Ovary (tissue), 10 donors: ENCODE measurements at regions of chr5 and their contacts with region 1.

Region 1: DNA sequence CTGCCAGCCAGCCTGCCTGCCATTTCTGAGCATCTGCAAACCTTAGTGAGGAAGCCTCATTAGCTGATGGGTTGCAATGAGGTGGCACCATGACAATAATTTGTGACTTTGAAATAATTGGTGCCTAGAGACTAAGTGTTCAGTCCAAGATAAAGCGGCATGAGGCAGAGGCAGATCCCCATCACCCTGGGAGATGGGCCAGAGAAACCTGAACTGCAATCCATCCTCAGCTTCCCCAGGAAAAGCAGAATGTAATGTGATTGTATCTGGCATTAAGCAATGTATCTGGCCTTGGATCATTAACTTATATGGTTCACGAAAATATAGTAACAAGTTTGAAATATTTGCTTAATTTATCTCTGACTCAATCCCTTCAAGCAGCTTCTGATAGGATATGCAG is 101.0 kb downstream of the SPOCK1 start:
- DNase-seq: no peak
- H3K4me3 ChIP-seq: no peak overlapping the region
- H3K27ac ChIP-seq: no peak overlapping the region
- H3K4me1 ChIP-seq: no peaks in the 10 kb centered on the region
- H3K27me3 ChIP-seq: no peaks in the 10 kb centered on the region
- CTCF ChIP-seq: no peak
- EP300 ChIP-seq: no peak
- POLR2A ChIP-seq: no peak

Region 2: GRCh38 chr5:137310051-137310730 is 88.0 kb before region 1 on chr5:
- intact Hi-C with region 1: no loop called
- DNase-seq: no peak
- H3K4me3 ChIP-seq: no peak overlapping the region
- H3K27ac ChIP-seq: no peak overlapping the region
- H3K4me1 ChIP-seq: no peaks in the 10 kb centered on the region
- H3K27me3 ChIP-seq: no peaks in the 10 kb centered on the region
- CTCF ChIP-seq: no peak
- EP300 ChIP-seq: no peak
- POLR2A ChIP-seq: no peak

Region 3: DNA sequence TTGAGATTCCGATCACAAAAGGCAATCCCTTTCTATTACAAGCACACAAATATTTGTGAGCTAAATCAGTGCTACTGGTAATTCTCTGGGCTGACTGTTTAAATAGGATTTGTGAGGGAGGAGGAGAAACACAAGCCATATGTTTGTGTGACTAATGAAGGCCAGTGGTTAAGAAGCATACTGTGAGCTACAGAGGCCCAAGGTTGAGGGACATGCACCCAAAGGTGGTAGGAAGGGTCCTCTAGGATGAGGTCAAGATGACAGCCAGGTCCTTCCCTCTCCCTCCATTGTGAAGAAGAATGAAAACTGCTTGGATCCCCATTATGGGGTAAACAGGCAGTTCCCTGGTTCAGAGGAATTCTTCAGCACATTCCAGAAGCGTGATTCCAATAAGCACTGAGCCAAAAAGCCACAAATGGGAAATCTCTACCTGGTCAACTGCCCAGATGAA is 17.1 kb after region 1 on chr5:
- intact Hi-C with region 1: loop called in 1 of 4 experiments (anchors 2 kb)
- DNase-seq: no peak
- H3K4me3 ChIP-seq: no peak overlapping the region
- H3K27ac ChIP-seq: no peak overlapping the region
- H3K4me1 ChIP-seq: no peaks in the 10 kb centered on the region
- H3K27me3 ChIP-seq: no peaks in the 10 kb centered on the region
- CTCF ChIP-seq: no peak
- EP300 ChIP-seq: no peak
- POLR2A ChIP-seq: no peak

Region 4: DNA sequence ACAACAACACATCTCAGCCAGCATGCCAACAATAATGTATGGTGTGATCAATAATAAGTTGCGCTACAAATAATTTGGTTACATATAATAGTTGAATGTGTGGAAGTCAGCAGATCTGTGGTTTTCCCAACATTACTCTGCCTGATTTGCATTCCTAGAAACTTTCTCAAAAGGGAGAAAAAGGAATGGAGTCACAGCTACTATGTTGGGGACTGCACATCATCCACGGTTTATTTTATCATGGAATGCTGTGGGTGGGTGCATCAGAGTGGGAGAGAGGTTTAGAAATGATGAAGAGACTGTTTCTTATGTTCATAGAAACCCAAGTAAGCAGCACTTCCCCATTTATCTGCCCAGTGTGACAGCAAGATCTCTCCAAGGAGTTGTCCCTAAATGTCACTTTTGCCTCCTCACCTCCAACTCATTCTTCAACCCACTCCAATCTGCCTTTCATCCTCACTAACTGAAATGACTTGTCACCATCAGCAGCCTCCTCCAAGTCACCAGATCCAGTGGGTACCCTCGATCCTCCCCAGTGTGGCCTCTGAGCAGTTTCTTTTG is 103.8 kb after region 1 on chr5:
- intact Hi-C with region 1: no loop called
- DNase-seq: no peak
- H3K4me3 ChIP-seq: no peak overlapping the region
- H3K27ac ChIP-seq: no peak overlapping the region
- H3K4me1 ChIP-seq: no peaks in the 10 kb centered on the region
- H3K27me3 ChIP-seq: no peaks in the 10 kb centered on the region
- CTCF ChIP-seq: no peak
- EP300 ChIP-seq: no peak
- POLR2A ChIP-seq: no peak

Region 5: GRCh38 chr5:137735555-137736284 is 337.6 kb after region 1 on chr5 and contains the start of gene KLHL3:
- intact Hi-C with region 1: no loop called
- DNase-seq: peak; percentile 19 to 47 (median 41)
- H3K4me3 ChIP-seq: peak within 1 kb of the TSS; percentile 31
- H3K27ac ChIP-seq: no peak within 1 kb of the TSS
- H3K4me1 ChIP-seq: peaks cover 2% of the 10 kb centered on the region
- H3K27me3 ChIP-seq: no peaks in the 10 kb centered on the region
- CTCF ChIP-seq: no peak
- EP300 ChIP-seq: no peak
- POLR2A ChIP-seq: no peak
- total RNA-seq, gene KLHL3: 5.0 to 15.7 (median 8.7) TPM